Mammary epithelial cell (primary cell): ENCODE measurements at regions of chr3 and their contacts with region 1.

Region 1: DNA sequence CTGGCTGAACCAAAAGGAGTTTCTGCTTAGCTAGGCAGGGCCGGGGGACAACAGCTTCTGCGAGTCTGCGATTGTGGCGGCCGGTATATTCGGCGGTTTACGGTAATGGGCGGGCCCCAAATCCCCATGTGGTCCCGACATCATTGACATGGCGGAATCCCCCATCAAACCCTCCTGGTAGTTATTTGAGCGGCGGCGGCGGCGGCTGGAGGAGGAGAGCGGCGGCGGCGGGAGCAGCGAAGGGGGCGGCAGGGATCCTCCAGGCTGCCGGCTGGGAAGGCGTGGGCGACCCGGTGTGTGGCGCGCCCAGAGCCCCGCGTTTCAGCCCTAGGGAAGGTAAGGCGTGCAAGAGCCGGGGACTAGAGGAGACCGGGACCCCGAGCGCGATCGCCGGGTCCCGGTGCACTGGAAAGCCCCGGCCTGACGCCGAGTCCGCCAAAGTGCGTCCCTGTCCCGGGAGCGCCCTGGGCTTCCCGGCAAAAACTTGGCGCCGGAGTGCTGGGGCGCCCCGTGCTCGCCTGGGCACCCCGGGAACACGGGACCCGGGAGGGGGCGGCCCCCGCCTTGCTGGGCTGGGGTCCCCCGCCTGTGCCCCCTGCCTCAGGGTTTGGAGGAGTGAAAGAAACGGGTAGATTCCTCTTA is at the start of gene FNDC3B:
- DNase-seq: peak; percentile 95
- H3K4me3 ChIP-seq: peak within 1 kb of the TSS; percentile 67 to 98 (median 81)
- H3K27ac ChIP-seq: peak within 1 kb of the TSS; percentile 97
- H3K4me1 ChIP-seq: peaks cover 15% of the 10 kb centered on the region
- H3K27me3 ChIP-seq: no peaks in the 10 kb centered on the region
- CTCF ChIP-seq: no peak
- total RNA-seq, gene FNDC3B: 161 to 200 TPM

Region 2: GRCh38 chr3:171874251-171874679 is 165.3 kb before region 1 on chr3:
- CTCF ChIA-PET with region 1: no interaction called
- dilution Hi-C with region 1: no loop called
- in situ Hi-C with region 1: no loop called
- intact Hi-C with region 1: loop called (anchors 10 kb)
- DNase-seq: peak; percentile 67
- H3K4me3 ChIP-seq: no peak overlapping the region
- H3K27ac ChIP-seq: peak overlapping the region; percentile 56
- H3K4me1 ChIP-seq: peaks cover 25% of the 10 kb centered on the region
- H3K27me3 ChIP-seq: no peaks in the 10 kb centered on the region
- CTCF ChIP-seq: no peak

Region 3: GRCh38 chr3:171959532-171960089 is 79.9 kb before region 1 on chr3:
- CTCF ChIA-PET with region 1: no interaction called
- dilution Hi-C with region 1: loop called (anchors 5 kb)
- in situ Hi-C with region 1: no loop called
- intact Hi-C with region 1: no loop called
- DNase-seq: peak; percentile 44
- H3K4me3 ChIP-seq: no peak overlapping the region
- H3K27ac ChIP-seq: no peak overlapping the region
- H3K4me1 ChIP-seq: peaks cover 23% of the 10 kb centered on the region
- H3K27me3 ChIP-seq: no peaks in the 10 kb centered on the region
- CTCF ChIP-seq: no peak

Region 4: GRCh38 chr3:172096881-172097420 is 57.4 kb after region 1 on chr3:
- CTCF ChIA-PET with region 1: no interaction called
- dilution Hi-C with region 1: no loop called
- in situ Hi-C with region 1: no loop called
- intact Hi-C with region 1: loop called (anchors 1 kb)
- DNase-seq: peak; percentile 87
- H3K4me3 ChIP-seq: no peak overlapping the region
- H3K27ac ChIP-seq: peak overlapping the region; percentile 43
- H3K4me1 ChIP-seq: peaks cover 29% of the 10 kb centered on the region
- H3K27me3 ChIP-seq: no peaks in the 10 kb centered on the region
- CTCF ChIP-seq: no peak

Region 5: DNA sequence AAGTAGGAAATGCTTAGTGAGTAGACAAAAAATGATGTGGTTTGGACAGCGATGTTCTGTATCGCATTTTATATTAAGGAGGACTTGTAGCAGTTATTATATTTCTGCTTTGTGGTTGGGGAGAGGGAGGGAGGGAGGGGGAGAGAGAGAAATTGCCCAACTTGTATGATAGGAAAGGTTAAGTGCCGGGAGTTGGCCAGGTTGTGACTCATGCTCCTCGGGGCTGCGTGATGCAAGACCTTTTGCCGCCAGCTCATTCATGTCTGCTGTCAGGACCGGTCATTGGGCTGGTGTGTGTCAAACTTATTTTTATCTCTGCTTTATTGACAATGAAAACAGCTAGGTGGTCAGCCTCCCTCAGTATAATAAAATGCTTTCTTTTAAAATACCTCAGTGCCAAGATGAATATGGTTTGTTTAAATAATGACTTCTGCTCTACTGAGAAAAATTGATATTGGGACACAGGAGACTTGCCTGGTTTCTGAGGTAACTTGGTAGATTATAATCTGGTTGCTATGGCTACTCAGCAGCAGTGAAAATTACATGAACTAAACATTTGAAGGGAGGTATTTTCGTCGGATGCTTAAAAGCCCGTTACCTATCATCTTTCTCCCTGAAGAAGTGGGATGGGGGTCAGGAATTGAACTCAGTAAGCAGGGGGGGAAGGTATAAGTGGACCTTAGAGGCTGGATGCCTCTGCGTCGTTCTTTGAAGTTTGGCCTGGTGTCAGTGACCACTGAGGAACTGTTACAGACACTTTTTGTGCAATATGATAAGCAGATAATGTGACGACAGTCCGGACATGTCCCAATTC is 90.5 kb after region 1 on chr3:
- CTCF ChIA-PET with region 1: no interaction called
- dilution Hi-C with region 1: no loop called
- in situ Hi-C with region 1: no loop called
- intact Hi-C with region 1: loop called (anchors 2 kb)
- DNase-seq: peak; percentile 98
- H3K4me3 ChIP-seq: no peak overlapping the region
- H3K27ac ChIP-seq: peak overlapping the region; percentile 98
- H3K4me1 ChIP-seq: peaks cover 20% of the 10 kb centered on the region
- H3K27me3 ChIP-seq: no peaks in the 10 kb centered on the region
- CTCF ChIP-seq: no peak

Region 6: GRCh38 chr3:172332256-172333041 is 292.9 kb after region 1 on chr3:
- CTCF ChIA-PET with region 1: interaction called, 16 read pairs
- dilution Hi-C with region 1: no loop called
- in situ Hi-C with region 1: no loop called
- intact Hi-C with region 1: no loop called
- DNase-seq: peak; percentile 50
- H3K4me3 ChIP-seq: no peak overlapping the region
- H3K27ac ChIP-seq: no peak overlapping the region
- H3K4me1 ChIP-seq: peaks cover 8% of the 10 kb centered on the region
- H3K27me3 ChIP-seq: no peaks in the 10 kb centered on the region
- CTCF ChIP-seq: peak; percentile 89 to 97